GM12878 (cell line): ENCODE measurements at regions of chr4 and their contacts with region 1.

Region 1: DNA sequence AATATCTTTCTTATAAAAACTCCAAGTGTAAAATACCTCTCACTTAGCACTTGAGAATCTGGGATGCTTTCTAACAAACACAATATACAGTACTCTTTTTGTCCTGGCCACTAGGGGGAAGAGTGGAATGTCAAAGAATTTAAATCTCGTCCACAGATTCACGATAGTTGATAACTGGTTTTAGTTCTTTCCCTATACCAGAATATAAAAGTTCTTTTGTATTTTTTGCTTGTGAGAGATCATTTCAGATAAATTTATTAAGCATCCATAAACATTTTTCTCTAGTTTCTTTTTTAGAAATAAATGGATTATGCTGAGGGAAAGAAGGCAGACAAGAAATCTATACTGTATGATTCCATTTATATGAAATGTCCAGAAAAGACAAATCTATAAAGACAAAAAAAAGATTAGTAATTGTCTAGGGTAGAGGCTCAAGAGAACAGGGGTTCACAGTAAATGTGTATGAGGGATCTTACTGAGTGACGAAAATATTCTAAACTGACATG is 50.4 kb downstream of the MGARP start:
- DNase-seq: no peak
- ATAC-seq: peak; percentile 86
- H3K4me3 ChIP-seq: no peak overlapping the region
- H3K27ac ChIP-seq: no peak overlapping the region
- H3K4me1 ChIP-seq: no peaks in the 10 kb centered on the region
- H3K27me3 ChIP-seq: no peaks in the 10 kb centered on the region
- CTCF ChIP-seq: peak; percentile 61 to 74 (median 64)
- EP300 ChIP-seq: no peak
- POLR2A ChIP-seq: no peak
- RAD21 ChIP-seq: peak; percentile 84

Region 2: GRCh38 chr4:139099366-139099982 is 130.1 kb before region 1 on chr4:
- CTCF ChIA-PET with region 1: interaction called, 38 read pairs
- POLR2A ChIA-PET with region 1: interaction called, 5 read pairs
- RAD21 ChIA-PET with region 1: interaction called, 15 read pairs
- SMC1A ChIA-PET with region 1: interaction called, 26 read pairs
- in situ Hi-C with region 1: no loop called
- intact Hi-C with region 1: loop called (anchors 1 kb)
- DNase-seq: peak; percentile 45
- ATAC-seq: peak; percentile 93
- H3K4me3 ChIP-seq: no peak overlapping the region
- H3K27ac ChIP-seq: no peak overlapping the region
- H3K4me1 ChIP-seq: no peaks in the 10 kb centered on the region
- H3K27me3 ChIP-seq: no peaks in the 10 kb centered on the region
- CTCF ChIP-seq: peak; percentile 81 to 88 (median 83)
- EP300 ChIP-seq: no peak
- POLR2A ChIP-seq: no peak
- RAD21 ChIP-seq: peak; percentile 92

Region 3: DNA sequence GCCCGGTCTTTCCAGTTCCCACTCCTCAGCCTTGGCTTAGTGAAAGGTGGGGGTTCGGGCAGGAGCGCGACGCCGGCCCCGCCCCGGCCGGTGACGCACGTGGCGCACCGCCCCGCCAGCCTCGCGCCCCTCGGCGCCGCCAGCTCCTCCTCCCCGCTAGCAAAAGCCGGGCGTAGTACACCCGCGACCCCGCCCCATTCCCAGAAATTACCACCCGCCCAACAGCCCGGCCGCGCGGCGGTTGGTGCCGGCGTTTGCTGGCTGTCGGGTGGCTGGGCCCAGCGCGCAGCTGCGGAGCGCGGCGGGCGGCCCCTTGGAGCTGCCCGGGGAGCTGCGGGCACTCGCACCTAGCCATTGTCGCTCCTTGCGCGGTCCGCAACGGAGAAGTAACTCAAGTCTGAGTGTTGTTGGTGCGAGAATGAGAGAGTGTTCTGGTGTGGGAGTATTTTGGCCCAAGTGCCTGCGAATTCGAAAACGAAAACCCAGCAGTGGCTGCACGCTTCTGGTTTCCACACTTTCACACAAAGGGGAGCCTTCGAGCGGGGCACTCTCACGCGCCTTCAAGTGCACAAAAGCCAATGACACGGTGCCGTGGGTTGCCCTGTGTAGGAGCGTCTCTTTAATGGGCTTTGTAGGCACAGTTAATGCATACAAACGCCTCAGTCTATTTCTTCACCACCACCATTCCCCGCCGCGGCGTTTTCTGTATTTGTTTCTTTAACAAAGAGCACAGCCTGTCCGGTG is 51.5 kb before region 1 on chr4:
- CTCF ChIA-PET with region 1: interaction called, 54 read pairs
- POLR2A ChIA-PET with region 1: no interaction called
- RAD21 ChIA-PET with region 1: interaction called, 4 read pairs
- SMC1A ChIA-PET with region 1: interaction called, 15 read pairs
- in situ Hi-C with region 1: no loop called
- intact Hi-C with region 1: no loop called
- DNase-seq: peak; percentile 48
- ATAC-seq: peak; percentile 74
- H3K4me3 ChIP-seq: peak overlapping the region; percentile 79
- H3K27ac ChIP-seq: peak overlapping the region; percentile 57
- H3K4me1 ChIP-seq: peaks cover 4% of the 10 kb centered on the region; the same call in 1 of the 2 replicates
- H3K27me3 ChIP-seq: peaks cover 2 to 3% of the 10 kb centered on the region in 2 experiments; a peak in 2 of 4 replicates
- CTCF ChIP-seq: no peak
- EP300 ChIP-seq: peak; percentile 13 to 32; a peak in 1 of 4 replicates
- POLR2A ChIP-seq: peak; percentile 81
- RAD21 ChIP-seq: no peak

Region 4: GRCh38 chr4:139191373-139191772 is 38.2 kb before region 1 on chr4:
- CTCF ChIA-PET with region 1: interaction called, 10 read pairs
- POLR2A ChIA-PET with region 1: no interaction called
- RAD21 ChIA-PET with region 1: interaction called, 6 read pairs
- SMC1A ChIA-PET with region 1: interaction called, 8 read pairs
- in situ Hi-C with region 1: no loop called
- intact Hi-C with region 1: no loop called
- DNase-seq: no peak
- ATAC-seq: no peak
- H3K4me3 ChIP-seq: no peak overlapping the region
- H3K27ac ChIP-seq: no peak overlapping the region
- H3K4me1 ChIP-seq: no peaks in the 10 kb centered on the region
- H3K27me3 ChIP-seq: no peaks in the 10 kb centered on the region
- CTCF ChIP-seq: no peak
- EP300 ChIP-seq: no peak
- POLR2A ChIP-seq: no peak
- RAD21 ChIP-seq: no peak

Region 5: GRCh38 chr4:139208404-139208945 is 21.1 kb before region 1 on chr4:
- CTCF ChIA-PET with region 1: interaction called, 6 read pairs
- POLR2A ChIA-PET with region 1: interaction called, 5 read pairs
- RAD21 ChIA-PET with region 1: no interaction called
- SMC1A ChIA-PET with region 1: interaction called, 38 read pairs
- in situ Hi-C with region 1: no loop called
- intact Hi-C with region 1: no loop called
- DNase-seq: no peak
- ATAC-seq: peak; percentile 71
- H3K4me3 ChIP-seq: no peak overlapping the region
- H3K27ac ChIP-seq: no peak overlapping the region
- H3K4me1 ChIP-seq: no peaks in the 10 kb centered on the region
- H3K27me3 ChIP-seq: no peaks in the 10 kb centered on the region
- CTCF ChIP-seq: no peak
- EP300 ChIP-seq: 0 out of 4 replicates have a peak, but pooled peaks of 1 of the 2 experiments have one; percentile 16
- POLR2A ChIP-seq: no peak
- RAD21 ChIP-seq: no peak

Region 6: DNA sequence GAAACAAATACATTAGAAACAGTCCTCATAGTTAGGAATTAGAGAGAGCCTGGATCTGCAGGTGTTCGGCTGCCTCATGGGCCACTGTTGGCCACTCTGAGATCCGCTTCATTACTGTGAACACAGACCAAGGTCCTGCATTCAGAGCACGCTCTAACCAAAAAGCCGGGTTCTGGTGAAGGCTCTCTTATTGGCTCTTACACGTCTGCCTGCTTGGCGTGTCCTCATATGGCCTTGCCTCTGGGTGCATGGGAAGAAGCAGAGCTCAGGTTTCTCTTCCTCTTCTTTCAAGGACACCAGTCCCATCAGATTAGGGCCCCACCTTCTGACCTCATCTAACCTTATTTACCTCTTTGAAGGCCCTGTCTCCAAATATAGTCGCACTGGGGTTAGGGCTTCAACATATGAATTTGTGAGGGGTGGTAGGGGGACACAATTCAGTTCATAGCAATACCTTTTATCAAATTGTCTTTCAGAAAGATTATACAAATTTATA is 15.5 kb before region 1 on chr4:
- CTCF ChIA-PET with region 1: interaction called, 33 read pairs
- POLR2A ChIA-PET with region 1: interaction called, 5 read pairs
- RAD21 ChIA-PET with region 1: interaction called, 10 read pairs
- SMC1A ChIA-PET with region 1: interaction called, 38 read pairs
- in situ Hi-C with region 1: no loop called
- intact Hi-C with region 1: no loop called
- DNase-seq: peak; percentile 65
- ATAC-seq: peak; percentile 98
- H3K4me3 ChIP-seq: no peak overlapping the region
- H3K27ac ChIP-seq: no peak overlapping the region
- H3K4me1 ChIP-seq: peaks cover 10% of the 10 kb centered on the region
- H3K27me3 ChIP-seq: no peaks in the 10 kb centered on the region
- CTCF ChIP-seq: no peak
- EP300 ChIP-seq: peak; percentile 15 to 51; a peak in 2 of 4 replicates
- POLR2A ChIP-seq: no peak
- RAD21 ChIP-seq: no peak

Region 7: DNA sequence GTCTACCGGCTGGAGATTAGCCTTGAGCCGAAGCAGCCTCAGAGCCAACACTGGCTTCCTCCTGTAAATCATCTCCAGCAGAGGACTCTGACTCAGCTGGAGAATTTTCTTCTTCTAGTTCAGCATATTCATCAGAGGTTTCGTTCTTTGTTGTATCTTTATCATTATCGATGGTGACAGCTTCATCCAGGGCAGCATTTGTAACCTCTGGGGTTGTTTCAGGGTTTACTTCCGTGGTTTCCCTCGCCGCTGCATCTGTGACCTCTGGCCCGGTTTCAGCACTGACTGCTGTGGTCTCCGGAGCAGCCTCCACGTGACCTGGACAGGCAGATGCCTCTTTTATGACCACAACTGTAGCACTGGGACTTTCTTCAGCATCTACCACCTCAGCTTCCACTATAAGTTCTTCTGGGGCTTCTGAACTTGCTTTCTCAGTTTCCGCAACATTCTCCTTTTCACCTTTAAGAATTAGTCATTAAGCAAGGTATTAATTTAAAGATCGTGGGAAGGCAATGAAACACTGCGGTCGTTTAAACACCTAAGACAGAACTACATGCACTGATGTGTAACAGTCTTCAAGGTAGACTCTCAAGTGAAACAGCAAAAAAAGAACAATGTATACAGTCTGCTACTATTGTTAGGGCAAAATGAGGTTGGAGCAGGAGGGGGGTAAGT is 37.1 kb after region 1 on chr4:
- CTCF ChIA-PET with region 1: interaction called, 5 read pairs
- POLR2A ChIA-PET with region 1: interaction called, 6 read pairs
- RAD21 ChIA-PET with region 1: interaction called, 5 read pairs
- SMC1A ChIA-PET with region 1: interaction called, 4 read pairs
- in situ Hi-C with region 1: no loop called
- intact Hi-C with region 1: loop called (anchors 5 kb)
- DNase-seq: peak; percentile 96
- ATAC-seq: peak; percentile 97
- H3K4me3 ChIP-seq: no peak overlapping the region; the same call in 1 of the 2 replicates
- H3K27ac ChIP-seq: no peak overlapping the region
- H3K4me1 ChIP-seq: peaks cover 19% of the 10 kb centered on the region
- H3K27me3 ChIP-seq: no peaks in the 10 kb centered on the region
- CTCF ChIP-seq: no peak
- EP300 ChIP-seq: peak; percentile 73 to 91
- POLR2A ChIP-seq: no peak
- RAD21 ChIP-seq: no peak